Activated T-helper 1 cell treated with anti-CD3 and anti-CD28 coated beads, Interleukin-12 subunit alpha, Interleukin-12 subunit beta, Interleukin-2, Interleukin-4 antibody, amounts not matched to agents 30 ng/mL and 10 ng/mL and 1 ng/mL, durations not matched to agents 14 hours and 24 hours and 36 hours (primary cell): ENCODE measurements at regions of chr2 and their contacts with region 1.

Region 1: DNA sequence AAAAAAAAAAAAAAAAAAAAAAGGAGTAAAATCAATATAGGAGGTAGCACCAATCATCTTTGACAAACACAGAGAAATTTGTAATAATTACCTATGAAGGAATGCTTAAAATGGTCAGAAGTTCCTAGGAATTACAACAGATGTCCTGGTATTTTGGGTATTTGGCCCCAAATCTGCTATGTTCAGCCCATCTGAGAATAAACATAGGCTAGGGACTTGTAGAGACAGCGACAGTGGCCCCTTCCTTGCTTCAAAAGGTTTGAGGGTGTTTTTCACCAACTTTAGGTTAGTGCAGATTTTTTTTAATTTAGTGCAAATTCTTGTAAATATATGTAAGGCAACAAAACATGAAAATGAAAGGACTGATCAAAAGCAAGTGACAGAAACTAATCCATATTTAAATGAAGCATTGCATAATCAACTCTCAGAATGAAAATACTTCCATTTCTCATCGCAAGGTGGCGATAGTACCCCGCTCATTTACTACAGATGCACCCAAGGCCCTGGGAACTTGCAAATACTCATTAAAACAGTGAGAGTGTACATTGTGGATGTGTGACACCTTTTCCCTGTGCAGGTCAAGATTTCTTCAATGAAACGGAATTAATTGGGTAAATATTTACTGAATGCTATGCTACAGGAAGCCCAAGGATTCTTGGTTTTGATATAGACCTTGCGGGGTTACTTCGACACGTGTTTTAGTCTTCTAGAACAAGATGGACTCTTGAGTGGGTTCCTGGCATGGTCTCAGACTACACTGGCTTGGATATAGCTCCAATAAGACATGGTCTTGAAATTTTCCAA is 44.6 kb downstream of the FAM124B start:
- DNase-seq: peak; percentile 35
- H3K4me3 Mint-ChIP-seq: no peak overlapping the region
- H3K27ac Mint-ChIP-seq: no peak overlapping the region
- H3K4me1 Mint-ChIP-seq: no peaks in the 10 kb centered on the region
- H3K27me3 Mint-ChIP-seq: peaks cover 9% of the 10 kb centered on the region

Region 2: DNA sequence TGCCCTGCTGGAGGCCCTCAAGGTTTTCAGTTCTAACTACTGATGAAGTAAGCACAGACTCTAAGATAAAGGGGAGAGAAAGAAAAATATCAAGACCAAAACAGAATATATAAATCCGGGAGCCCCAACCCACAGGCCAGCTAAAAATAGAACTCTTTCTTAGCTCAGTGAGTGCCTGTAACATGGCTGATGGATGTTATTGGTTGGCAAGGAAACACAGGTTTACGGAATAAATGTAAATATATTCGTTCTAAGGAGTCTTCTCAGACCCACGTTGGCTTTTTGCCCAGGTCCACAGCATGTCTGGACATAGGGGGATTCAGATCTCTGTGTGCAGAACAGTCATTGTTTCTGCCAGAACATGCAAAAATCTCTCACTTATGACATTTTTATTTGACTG is 179.2 kb before region 1 on chr2:
- intact Hi-C with region 1: no loop called
- DNase-seq: no peak
- H3K4me3 Mint-ChIP-seq: no peak overlapping the region
- H3K27ac Mint-ChIP-seq: no peak overlapping the region
- H3K4me1 Mint-ChIP-seq: no peaks in the 10 kb centered on the region
- H3K27me3 Mint-ChIP-seq: peaks cover 2% of the 10 kb centered on the region

Region 3: GRCh38 chr2:224449212-224450147 is 92.2 kb after region 1 on chr2:
- intact Hi-C with region 1: loop called (anchors 1 kb)
- DNase-seq: no peak
- H3K4me3 Mint-ChIP-seq: no peak overlapping the region
- H3K27ac Mint-ChIP-seq: no peak overlapping the region
- H3K4me1 Mint-ChIP-seq: no peaks in the 10 kb centered on the region
- H3K27me3 Mint-ChIP-seq: peaks cover 18% of the 10 kb centered on the region

Region 4: DNA sequence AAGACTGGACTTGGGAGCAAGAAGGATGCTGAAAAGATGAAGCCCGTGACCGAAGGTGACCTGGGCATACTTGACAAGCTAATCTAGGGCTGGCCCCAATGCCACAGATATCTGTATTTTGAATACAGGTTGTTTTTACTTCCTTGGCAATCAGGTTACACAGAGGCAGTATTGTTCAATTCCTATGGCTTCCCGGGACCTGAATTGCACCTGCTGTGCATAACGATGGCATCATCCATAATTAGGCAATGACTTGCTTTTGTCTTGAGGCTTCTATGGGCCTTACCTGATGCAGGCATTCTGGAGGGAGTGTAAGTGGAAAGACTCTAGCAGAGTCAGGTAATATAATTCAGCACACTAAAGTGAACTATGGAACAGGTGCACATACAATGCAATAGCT is 288.4 kb after region 1 on chr2:
- intact Hi-C with region 1: no loop called
- DNase-seq: no peak
- H3K4me3 Mint-ChIP-seq: no peak overlapping the region
- H3K27ac Mint-ChIP-seq: no peak overlapping the region
- H3K4me1 Mint-ChIP-seq: no peaks in the 10 kb centered on the region
- H3K27me3 Mint-ChIP-seq: peaks cover 4% of the 10 kb centered on the region

Region 5: GRCh38 chr2:224778474-224778877 is 421.2 kb after region 1 on chr2:
- intact Hi-C with region 1: loop called (anchors 1 kb)
- DNase-seq: peak; percentile 35
- H3K4me3 Mint-ChIP-seq: no peak overlapping the region
- H3K27ac Mint-ChIP-seq: no peak overlapping the region
- H3K4me1 Mint-ChIP-seq: peaks cover 7% of the 10 kb centered on the region
- H3K27me3 Mint-ChIP-seq: no peaks in the 10 kb centered on the region